Sigmoid colon (tissue), 7 donors: ENCODE measurements at regions of chr6 and their contacts with region 1.

Region 1: DNA sequence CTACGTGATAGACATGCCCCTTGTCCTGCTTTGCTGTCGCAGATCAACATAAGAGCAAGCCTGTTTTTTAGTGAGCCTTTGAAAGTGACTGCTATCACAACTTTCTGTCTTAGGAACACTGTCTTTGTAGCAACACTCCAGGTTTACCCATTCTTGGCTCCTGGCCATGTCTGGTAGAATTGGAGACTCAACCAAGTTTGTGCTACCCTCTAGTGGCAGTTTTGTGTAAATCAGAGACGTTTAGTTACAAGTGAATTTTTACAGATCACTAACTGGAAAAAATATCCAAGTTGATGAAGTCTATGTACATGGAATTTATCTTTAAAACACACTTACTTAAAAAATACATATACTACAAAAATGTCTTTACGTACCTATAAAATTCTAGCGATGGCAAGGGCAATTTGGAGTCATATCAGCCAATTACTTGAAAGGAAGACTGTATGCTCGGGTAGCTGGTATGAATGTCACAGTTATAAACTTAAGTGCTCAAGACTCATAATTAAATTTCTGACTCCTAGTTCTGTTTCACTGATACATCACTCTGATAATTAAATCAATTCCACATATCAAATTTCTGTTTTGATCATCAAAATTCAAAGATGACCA is 101.4 kb downstream of the ADGB start:
- DNase-seq: peak; percentile 89
- H3K4me3 ChIP-seq: no peak overlapping the region
- H3K27ac ChIP-seq: no peak overlapping the region
- H3K4me1 ChIP-seq: no peaks in the 10 kb centered on the region
- H3K27me3 ChIP-seq: no peaks in the 10 kb centered on the region
- CTCF ChIP-seq: peak; percentile 36 to 77 (median 60)
- EP300 ChIP-seq: no peak
- POLR2A ChIP-seq: no peak

Region 2: GRCh38 chr6:145929037-145929633 is 771.0 kb before region 1 on chr6:
- intact Hi-C with region 1: loop called (anchors 5 kb)
- DNase-seq: no peak
- H3K4me3 ChIP-seq: no peak overlapping the region
- H3K27ac ChIP-seq: no peak overlapping the region
- H3K4me1 ChIP-seq: no peaks in the 10 kb centered on the region
- H3K27me3 ChIP-seq: no peaks in the 10 kb centered on the region
- CTCF ChIP-seq: peak in 3 of 4 experiments; percentile 7 to 58 (median 33)
- EP300 ChIP-seq: no peak
- POLR2A ChIP-seq: no peak

Region 3: DNA sequence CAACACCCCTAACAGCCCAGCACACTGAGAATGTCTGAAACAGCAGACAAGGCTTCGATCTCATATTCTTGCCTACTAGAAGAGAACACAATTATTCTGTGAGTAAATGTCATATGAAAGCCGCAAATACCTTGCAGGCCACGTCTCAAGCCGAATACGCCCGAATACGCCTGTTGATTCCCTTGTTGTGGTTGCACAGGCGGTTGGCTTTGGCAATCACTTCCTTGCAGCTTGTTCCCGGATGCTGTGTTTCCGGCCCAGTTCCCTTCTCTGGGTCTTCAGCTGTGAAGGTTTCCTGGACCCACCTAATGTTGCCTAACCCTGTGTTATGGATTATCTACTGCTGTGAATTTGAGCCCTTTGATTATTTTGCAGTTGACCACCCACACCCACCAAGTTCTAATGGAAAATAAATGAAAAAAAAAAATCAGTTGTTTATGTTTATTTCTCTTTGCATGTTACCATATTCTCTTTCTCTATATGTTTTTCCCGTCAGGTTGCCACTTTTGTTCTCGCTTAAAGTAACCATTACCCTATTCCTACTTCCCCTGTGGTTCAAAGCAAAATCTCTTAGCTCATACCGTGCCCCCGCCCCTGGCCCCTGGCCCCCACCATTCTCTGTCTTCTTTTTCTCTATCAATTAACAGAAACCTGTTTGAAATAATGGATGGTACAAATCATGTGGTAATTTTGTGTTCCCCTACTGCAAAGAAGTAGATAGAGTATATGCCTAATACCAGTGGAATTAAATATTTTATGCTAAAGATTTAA is 71.0 kb after region 1 on chr6:
- intact Hi-C with region 1: no loop called
- DNase-seq: peak; percentile 83
- H3K4me3 ChIP-seq: no peak overlapping the region
- H3K27ac ChIP-seq: peak overlapping the region in 2 of 4 donors; percentile 40 to 46
- H3K4me1 ChIP-seq: no peaks in the 10 kb centered on the region
- H3K27me3 ChIP-seq: no peaks in the 10 kb centered on the region
- CTCF ChIP-seq: no peak
- EP300 ChIP-seq: peak in 1 of 4 donors; percentile 42
- POLR2A ChIP-seq: no peak